IMR-90 (cell line): ENCODE measurements at regions of chr2 and their contacts with region 1.

Region 1: GRCh38 chr2:231800493-231801091 is 14.3 kb downstream of the COPS7B start:
- DNase-seq: peak; percentile 29
- ATAC-seq: peak; percentile 80
- H3K4me3 ChIP-seq: no peak overlapping the region
- H3K27ac ChIP-seq: no peak overlapping the region
- H3K4me1 ChIP-seq: no peaks in the 10 kb centered on the region; the same call in 1 of the 2 replicates
- H3K27me3 ChIP-seq: no peaks in the 10 kb centered on the region
- CTCF ChIP-seq: peak; percentile 69
- POLR2A ChIP-seq: no peak
- RAD21 ChIP-seq: peak; percentile 48

Region 2: GRCh38 chr2:231854671-231855070 is 54.1 kb after region 1 on chr2:
- CTCF ChIA-PET with region 1: no interaction called
- POLR2A ChIA-PET with region 1: no interaction called
- dilution Hi-C with region 1: no loop called
- in situ Hi-C with region 1: no loop called
- intact Hi-C with region 1: loop called (anchors 5 kb)
- DNase-seq: no peak
- ATAC-seq: no peak
- H3K4me3 ChIP-seq: no peak overlapping the region
- H3K27ac ChIP-seq: no peak overlapping the region
- H3K4me1 ChIP-seq: no peaks in the 10 kb centered on the region
- H3K27me3 ChIP-seq: peaks cover 15% of the 10 kb centered on the region
- CTCF ChIP-seq: no peak
- POLR2A ChIP-seq: no peak
- RAD21 ChIP-seq: no peak

Region 3: DNA sequence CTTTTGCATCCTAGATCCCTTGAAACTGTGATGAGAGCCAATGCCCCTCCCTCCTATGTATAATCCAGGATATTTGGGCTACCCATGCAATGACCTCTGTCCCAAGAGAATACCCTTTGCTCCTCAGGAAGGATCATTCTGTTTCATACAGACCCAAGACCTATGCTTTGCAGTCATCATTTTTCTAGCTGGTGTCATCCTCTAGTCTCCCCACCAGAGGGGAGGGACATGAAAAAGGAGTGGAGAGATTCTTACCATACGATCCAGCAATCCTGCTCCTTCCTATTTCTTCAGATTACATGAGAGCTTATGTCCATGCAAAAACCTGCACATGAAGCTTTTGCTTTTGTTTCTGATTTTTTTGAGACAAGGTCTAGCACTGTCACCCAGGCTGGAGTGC is 882.8 kb after region 1 on chr2:
- CTCF ChIA-PET with region 1: no interaction called
- POLR2A ChIA-PET with region 1: no interaction called
- dilution Hi-C with region 1: no loop called
- in situ Hi-C with region 1: no loop called
- intact Hi-C with region 1: no loop called
- DNase-seq: no peak
- ATAC-seq: no peak
- H3K4me3 ChIP-seq: no peak overlapping the region
- H3K27ac ChIP-seq: no peak overlapping the region
- H3K4me1 ChIP-seq: no peaks in the 10 kb centered on the region
- H3K27me3 ChIP-seq: peaks cover 22% of the 10 kb centered on the region
- CTCF ChIP-seq: no peak
- POLR2A ChIP-seq: no peak
- RAD21 ChIP-seq: no peak